ENCODE measurements at regions of chr12 and their contacts with region 1.

Region 1: DNA sequence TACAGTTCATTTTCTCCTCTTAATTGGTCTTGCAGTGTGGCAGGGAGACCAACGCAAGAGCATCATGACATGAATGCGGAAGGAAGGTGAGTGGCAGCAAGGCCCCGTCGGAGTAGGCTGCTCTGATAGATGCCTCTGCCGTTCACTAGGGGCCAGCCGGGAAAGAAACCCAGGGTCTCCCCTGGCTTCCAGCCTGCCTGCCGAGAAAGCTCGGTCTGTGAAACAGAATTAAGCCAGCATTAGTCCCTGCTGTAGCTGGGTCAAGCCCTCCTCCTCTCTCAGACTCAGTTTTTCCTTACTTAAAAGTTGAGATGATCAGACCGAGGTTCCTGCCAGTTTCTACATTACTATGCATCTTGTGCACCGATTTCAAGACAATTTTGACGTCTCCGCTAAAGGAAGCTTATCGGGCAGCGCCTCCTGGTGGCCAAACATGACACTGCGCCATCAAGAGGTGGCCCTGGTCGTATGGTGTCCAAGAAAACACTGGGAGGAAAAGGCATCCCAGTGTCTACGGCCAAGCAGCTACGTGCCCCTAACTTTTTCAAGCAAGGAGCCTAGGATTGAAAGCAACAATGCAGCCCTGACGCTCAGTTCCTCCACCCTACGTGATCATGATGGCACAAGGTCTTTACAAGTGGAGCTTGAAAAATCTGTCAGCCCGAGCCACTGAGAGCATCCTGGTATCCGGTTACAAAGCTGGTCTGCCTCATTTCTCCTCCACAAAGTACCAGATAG is 131.6 kb downstream of the KSR2 start:
- DNase-seq: peak; percentile 44 to 81 (median 66)
- ATAC-seq: peak; percentile 52
- H3K4me3 ChIP-seq: no peak overlapping the region
- H3K4me3 Mint-ChIP-seq: peak overlapping the region; percentile 30
- H3K27ac ChIP-seq: no peak overlapping the region
- H3K27ac Mint-ChIP-seq: no peak overlapping the region
- H3K4me1 ChIP-seq: peaks cover 6% of the 10 kb centered on the region
- H3K4me1 Mint-ChIP-seq: peaks cover 8% of the 10 kb centered on the region
- H3K27me3 ChIP-seq: peaks cover 0 to 3% of the 10 kb centered on the region in 2 experiments
- H3K27me3 Mint-ChIP-seq: peaks cover 34% of the 10 kb centered on the region
- CTCF ChIP-seq: peak; percentile 89

Region 2: DNA sequence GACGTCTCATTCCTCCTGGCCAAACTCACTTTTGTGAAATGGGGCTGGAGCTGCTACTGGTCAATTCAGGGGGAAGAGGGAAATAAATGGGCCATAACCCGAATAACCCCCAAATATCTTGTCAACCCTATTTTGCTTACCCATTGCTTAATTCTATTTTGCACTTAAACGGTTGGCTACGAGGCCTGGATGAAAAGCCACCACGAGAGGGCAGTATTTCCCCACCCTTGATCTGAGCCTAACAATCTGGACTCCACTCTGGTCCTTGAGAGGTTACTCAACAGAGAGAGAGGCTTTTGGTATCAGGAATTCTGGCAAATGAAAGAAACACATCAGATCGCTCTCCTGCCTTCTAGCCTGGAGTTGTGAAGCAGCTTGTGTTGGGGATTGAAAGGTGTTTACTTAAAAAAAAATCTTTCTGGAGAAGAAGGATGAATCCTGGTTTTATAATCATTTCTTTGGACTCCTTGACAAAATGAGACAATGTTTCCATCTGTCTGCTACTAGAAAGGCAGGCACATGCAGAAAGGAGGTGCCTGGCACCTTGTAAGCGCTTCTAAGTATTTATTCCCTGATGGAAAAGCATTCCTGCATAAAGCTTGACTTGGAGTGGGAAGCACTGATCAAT is 624.5 kb before region 1 on chr12:
- CTCF ChIA-PET with region 1: interaction called, 4 read pairs
- POLR2A ChIA-PET with region 1: no interaction called
- intact Hi-C with region 1: loop called (anchors 1 kb)
- DNase-seq: peak; percentile 33 to 79 (median 51)
- ATAC-seq: peak; percentile 56
- H3K4me3 ChIP-seq: no peak overlapping the region
- H3K4me3 Mint-ChIP-seq: no peak overlapping the region
- H3K27ac ChIP-seq: no peak overlapping the region
- H3K27ac Mint-ChIP-seq: no peak overlapping the region
- H3K4me1 ChIP-seq: no peaks in the 10 kb centered on the region
- H3K4me1 Mint-ChIP-seq: no peaks in the 10 kb centered on the region
- H3K27me3 ChIP-seq: no peaks in the 10 kb centered on the region
- H3K27me3 Mint-ChIP-seq: peaks cover 41% of the 10 kb centered on the region
- CTCF ChIP-seq: peak; percentile 87

Region 3: GRCh38 chr12:117236456-117237001 is 600.6 kb before region 1 on chr12:
- CTCF ChIA-PET with region 1: no interaction called
- POLR2A ChIA-PET with region 1: no interaction called
- intact Hi-C with region 1: loop called (anchors 1 to 2 kb)
- DNase-seq: peak; percentile 51 to 81 (median 62)
- ATAC-seq: no peak
- H3K4me3 ChIP-seq: no peak overlapping the region
- H3K4me3 Mint-ChIP-seq: no peak overlapping the region
- H3K27ac ChIP-seq: no peak overlapping the region
- H3K27ac Mint-ChIP-seq: no peak overlapping the region
- H3K4me1 ChIP-seq: peaks cover 5% of the 10 kb centered on the region
- H3K4me1 Mint-ChIP-seq: no peaks in the 10 kb centered on the region
- H3K27me3 ChIP-seq: peaks cover 2 to 22% of the 10 kb centered on the region in 2 experiments
- H3K27me3 Mint-ChIP-seq: peaks cover 36% of the 10 kb centered on the region
- CTCF ChIP-seq: peak; percentile 65

Region 4: DNA sequence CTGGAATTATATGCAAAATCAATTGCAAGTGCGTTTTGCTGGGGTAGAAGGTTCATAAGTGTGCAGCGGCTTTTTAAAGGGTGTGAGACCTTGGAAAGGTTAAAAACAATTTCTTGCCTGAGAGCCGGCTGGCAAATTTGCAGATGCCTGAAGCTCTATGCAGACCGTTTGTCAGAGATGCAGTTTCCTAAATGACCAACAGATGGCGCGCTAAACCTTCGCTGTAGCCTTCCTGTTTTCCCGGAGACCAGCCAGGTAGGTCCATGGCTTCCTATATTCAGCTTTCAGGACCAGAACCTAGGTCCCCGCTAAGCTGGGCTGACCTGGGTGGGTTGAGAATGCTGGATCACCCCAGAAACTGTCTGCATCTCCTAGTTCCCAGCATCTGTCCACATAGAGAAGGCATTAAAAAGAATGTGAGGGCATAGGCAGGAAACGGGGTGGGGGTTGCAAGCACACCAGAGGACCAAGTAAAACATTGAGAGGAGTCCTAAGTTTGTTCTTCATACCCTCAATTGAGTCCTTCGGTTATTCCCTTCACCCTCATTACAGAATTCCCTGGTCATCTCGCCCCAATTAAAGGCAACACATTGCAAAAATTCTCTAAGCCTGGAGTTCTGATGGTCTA is 470.0 kb before region 1 on chr12:
- CTCF ChIA-PET with region 1: no interaction called
- POLR2A ChIA-PET with region 1: no interaction called
- intact Hi-C with region 1: loop called (anchors 2 to 5 kb)
- DNase-seq: peak in 11 of 14 experiments; percentile 6 to 57 (median 19)
- ATAC-seq: no peak
- H3K4me3 ChIP-seq: no peak overlapping the region
- H3K4me3 Mint-ChIP-seq: no peak overlapping the region
- H3K27ac ChIP-seq: no peak overlapping the region
- H3K27ac Mint-ChIP-seq: no peak overlapping the region
- H3K4me1 ChIP-seq: no peaks in the 10 kb centered on the region
- H3K4me1 Mint-ChIP-seq: no peaks in the 10 kb centered on the region
- H3K27me3 ChIP-seq: peaks cover 13 to 18% of the 10 kb centered on the region in 2 experiments
- H3K27me3 Mint-ChIP-seq: peaks cover 54% of the 10 kb centered on the region
- CTCF ChIP-seq: peak; percentile 54